GM12878 (cell line): ENCODE measurements at regions of chr11 and their contacts with region 1.

Region 1: DNA sequence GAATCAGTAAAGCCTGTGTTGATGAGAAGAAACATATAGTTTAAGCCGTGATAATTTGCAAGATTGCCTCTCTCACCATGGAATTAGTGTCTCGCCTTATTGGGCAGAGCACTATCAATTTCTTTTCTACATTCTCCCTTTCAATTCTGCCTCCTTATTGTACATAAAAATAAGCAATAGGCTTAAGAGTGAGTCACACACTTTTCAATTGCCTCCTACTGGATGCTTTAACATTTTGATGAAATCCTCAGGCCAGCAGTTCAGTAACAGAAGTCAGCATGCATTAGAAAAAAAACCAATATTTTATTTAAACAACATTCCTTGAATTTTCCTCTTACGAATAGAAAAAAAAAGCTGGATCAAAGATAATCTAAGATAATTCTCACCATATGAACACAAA is 33.8 kb upstream of the VWA5A start:
- DNase-seq: no peak
- ATAC-seq: no peak
- H3K4me3 ChIP-seq: no peak overlapping the region
- H3K27ac ChIP-seq: no peak overlapping the region
- H3K4me1 ChIP-seq: peaks cover 2% of the 10 kb centered on the region; the same call in 1 of the 2 replicates
- H3K27me3 ChIP-seq: peaks cover 0 to 2% of the 10 kb centered on the region in 2 experiments; a peak in 1 of 4 replicates
- CTCF ChIP-seq: no peak
- EP300 ChIP-seq: no peak
- POLR2A ChIP-seq: no peak
- RAD21 ChIP-seq: no peak

Region 2: GRCh38 chr11:124096364-124096763 is 14.9 kb after region 1 on chr11:
- CTCF ChIA-PET with region 1: no interaction called
- POLR2A ChIA-PET with region 1: no interaction called
- RAD21 ChIA-PET with region 1: no interaction called
- SMC1A ChIA-PET with region 1: no interaction called
- in situ Hi-C with region 1: no loop called
- intact Hi-C with region 1: no loop called
- DNase-seq: no peak
- ATAC-seq: no peak
- H3K4me3 ChIP-seq: no peak overlapping the region
- H3K27ac ChIP-seq: no peak overlapping the region
- H3K4me1 ChIP-seq: no peaks in the 10 kb centered on the region
- H3K27me3 ChIP-seq: no peaks in the 10 kb centered on the region; a peak in 2 of 4 replicates
- CTCF ChIP-seq: no peak
- EP300 ChIP-seq: no peak
- POLR2A ChIP-seq: no peak
- RAD21 ChIP-seq: no peak

Region 3: GRCh38 chr11:124194698-124195410 is 113.4 kb after region 1 on chr11:
- CTCF ChIA-PET with region 1: interaction called, 11 read pairs
- POLR2A ChIA-PET with region 1: no interaction called
- RAD21 ChIA-PET with region 1: no interaction called
- SMC1A ChIA-PET with region 1: no interaction called
- in situ Hi-C with region 1: no loop called
- intact Hi-C with region 1: no loop called
- DNase-seq: peak; percentile 9
- ATAC-seq: peak; percentile 95
- H3K4me3 ChIP-seq: no peak overlapping the region
- H3K27ac ChIP-seq: no peak overlapping the region
- H3K4me1 ChIP-seq: no peaks in the 10 kb centered on the region
- H3K27me3 ChIP-seq: no peaks in the 10 kb centered on the region
- CTCF ChIP-seq: peak; percentile 68 to 87 (median 73)
- EP300 ChIP-seq: no peak
- POLR2A ChIP-seq: no peak
- RAD21 ChIP-seq: peak; percentile 70